Ascending aorta (tissue), 2 donors: ENCODE measurements at regions of chr6 and their contacts with region 1.

Region 1: GRCh38 chr6:144149891-144150709 is at the start of gene STX11:
- DNase-seq: peak; percentile 29 to 82
- H3K4me3 ChIP-seq: peak within 1 kb of the TSS; percentile 68 to 80
- H3K27ac ChIP-seq: peak within 1 kb of the TSS; percentile 19 to 47
- H3K4me1 ChIP-seq: peaks cover 0 to 4% of the 10 kb centered on the region in 2 donors
- H3K27me3 ChIP-seq: no peaks in the 10 kb centered on the region
- CTCF ChIP-seq: no peak
- total RNA-seq, gene STX11: 29.5 TPM

Region 2: GRCh38 chr6:143569040-143569439 is 581.1 kb before region 1 on chr6:
- intact Hi-C with region 1: no loop called
- DNase-seq: no peak
- H3K4me3 ChIP-seq: no peak overlapping the region
- H3K27ac ChIP-seq: no peak overlapping the region
- H3K4me1 ChIP-seq: no peaks in the 10 kb centered on the region
- H3K27me3 ChIP-seq: no peaks in the 10 kb centered on the region
- CTCF ChIP-seq: no peak

Region 3: DNA sequence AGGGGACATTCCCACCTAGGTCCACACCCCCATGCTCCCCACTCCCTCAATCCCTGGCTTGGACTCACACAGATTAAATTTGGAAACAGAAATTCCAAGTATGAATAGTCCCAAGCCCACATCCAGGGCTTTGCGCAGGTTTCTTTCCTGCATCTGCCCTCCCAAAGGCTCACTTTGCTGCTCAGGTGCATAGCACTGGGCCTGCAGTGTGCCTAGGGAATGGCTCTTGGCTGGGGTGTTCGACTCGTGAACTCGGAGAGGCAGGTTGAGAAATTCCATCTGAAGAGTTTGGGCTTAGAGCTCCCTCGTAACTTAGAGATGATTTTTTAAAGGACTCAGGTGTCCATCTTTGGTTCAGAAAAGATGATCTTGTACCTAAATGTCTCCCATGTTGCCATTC is 39.9 kb before region 1 on chr6:
- intact Hi-C with region 1: loop called (anchors 5 kb)
- DNase-seq: no peak
- H3K4me3 ChIP-seq: peak overlapping the region in 1 of 2 donors; percentile 38
- H3K27ac ChIP-seq: no peak overlapping the region
- H3K4me1 ChIP-seq: no peaks in the 10 kb centered on the region
- H3K27me3 ChIP-seq: no peaks in the 10 kb centered on the region
- CTCF ChIP-seq: no peak

Region 4: DNA sequence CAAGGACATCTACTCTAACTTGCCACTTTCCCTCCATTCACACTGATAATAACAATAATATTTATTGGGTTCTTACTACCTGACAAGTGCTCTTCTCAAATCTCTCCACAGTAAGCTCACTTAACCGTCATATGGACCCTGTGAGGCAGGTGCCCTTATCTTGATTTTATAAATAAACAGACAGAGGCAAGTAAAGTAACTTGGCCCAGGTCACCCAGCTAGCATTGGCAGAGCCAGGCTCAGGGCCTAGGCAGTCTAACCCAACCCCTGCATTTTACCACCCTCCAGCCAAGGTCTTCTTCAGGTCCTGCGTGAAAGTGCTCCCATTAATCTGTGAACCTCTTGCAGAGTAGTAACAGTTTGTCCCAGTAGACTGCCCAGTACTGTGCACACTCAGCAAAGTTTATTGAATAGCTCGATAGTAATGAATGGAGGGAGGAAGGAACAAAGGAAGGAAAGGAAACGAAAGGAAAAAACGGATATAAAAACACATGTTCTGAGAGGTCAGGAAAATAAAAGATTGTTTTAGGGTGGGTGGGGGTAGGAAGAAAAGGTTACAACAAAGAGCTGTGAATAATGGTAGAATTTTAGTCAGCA is 16.8 kb before region 1 on chr6:
- intact Hi-C with region 1: loop called (anchors 1 kb)
- DNase-seq: no peak
- H3K4me3 ChIP-seq: no peak overlapping the region
- H3K27ac ChIP-seq: no peak overlapping the region
- H3K4me1 ChIP-seq: peaks cover 0 to 2% of the 10 kb centered on the region in 2 donors
- H3K27me3 ChIP-seq: no peaks in the 10 kb centered on the region
- CTCF ChIP-seq: no peak

Region 5: GRCh38 chr6:144232176-144232831 is 82.2 kb after region 1 on chr6:
- intact Hi-C with region 1: no loop called
- DNase-seq: no peak
- H3K4me3 ChIP-seq: no peak overlapping the region
- H3K27ac ChIP-seq: peak overlapping the region; percentile 44 to 73
- H3K4me1 ChIP-seq: peaks cover 0 to 16% of the 10 kb centered on the region in 2 donors
- H3K27me3 ChIP-seq: no peaks in the 10 kb centered on the region
- CTCF ChIP-seq: no peak

Region 6: DNA sequence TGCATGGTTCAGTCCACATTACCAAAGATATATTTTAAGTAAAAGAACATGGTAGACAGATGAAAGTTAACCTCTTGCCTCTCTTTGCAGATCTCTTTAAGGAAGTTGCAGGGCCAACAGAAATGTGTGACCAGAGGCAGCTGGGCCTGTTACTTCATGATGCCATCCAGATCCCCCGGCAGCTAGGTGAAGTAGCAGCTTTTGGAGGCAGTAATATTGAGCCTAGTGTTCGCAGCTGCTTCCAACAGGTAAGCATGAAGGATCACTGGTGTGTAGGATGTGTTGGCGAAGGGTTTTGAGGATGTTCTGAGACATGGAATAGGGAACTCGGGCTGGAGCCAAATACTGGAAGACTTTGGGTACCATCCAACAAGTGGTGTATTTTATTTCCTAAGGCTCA is 643.6 kb after region 1 on chr6:
- intact Hi-C with region 1: no loop called
- DNase-seq: no peak
- H3K4me3 ChIP-seq: no peak overlapping the region
- H3K27ac ChIP-seq: no peak overlapping the region
- H3K4me1 ChIP-seq: no peaks in the 10 kb centered on the region
- H3K27me3 ChIP-seq: no peaks in the 10 kb centered on the region
- CTCF ChIP-seq: no peak